ENCODE measurements at regions of chr11 and their contacts with region 1.

Region 1: DNA sequence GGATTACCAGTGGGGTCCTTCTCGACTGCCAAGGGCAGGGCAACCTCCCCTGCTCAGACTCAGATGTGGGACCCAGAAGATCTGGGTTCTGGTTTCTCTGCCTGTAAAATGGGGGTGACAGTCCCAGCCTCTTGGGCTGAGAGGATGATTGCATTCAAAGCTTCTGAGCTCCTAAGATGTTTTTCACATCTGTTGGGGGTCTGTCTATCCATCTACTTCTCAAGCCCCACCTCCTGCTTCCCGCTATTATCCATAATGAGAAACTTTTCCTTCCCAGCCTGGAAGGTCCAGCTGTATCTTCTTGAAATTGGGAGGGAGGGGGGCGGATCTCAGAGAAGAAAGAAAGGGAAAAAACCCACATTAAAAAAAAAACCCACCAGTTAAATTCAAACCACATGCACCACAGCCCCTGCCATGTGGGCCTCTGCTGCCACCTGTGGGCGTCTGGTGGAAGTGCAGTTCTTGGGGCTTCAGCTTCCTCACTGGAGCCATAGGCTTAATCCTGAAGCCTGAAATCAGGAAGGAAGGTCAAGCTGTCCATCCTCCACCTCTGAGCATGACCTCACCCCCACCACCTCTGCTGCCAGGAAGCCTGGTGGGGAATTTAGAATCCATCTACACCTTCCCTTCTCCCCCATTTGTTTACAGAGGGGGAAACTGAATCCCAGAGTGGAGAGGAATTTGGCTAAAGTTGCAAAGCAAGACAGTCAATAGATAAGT is 27.3 kb downstream of the ARHGEF17 start:
- DNase-seq: peak; percentile 91
- H3K4me3 ChIP-seq: no peak overlapping the region
- H3K27ac ChIP-seq: peak overlapping the region in 6 of 8 donors; percentile 36 to 63 (median 50)
- H3K4me1 ChIP-seq: peaks cover 3 to 74% (median 36%) of the 10 kb centered on the region in 6 donors
- H3K27me3 ChIP-seq: no peaks in the 10 kb centered on the region
- CTCF ChIP-seq: peak; percentile 92 to 99 (median 98)
- POLR2A ChIP-seq: no peak

Region 2: DNA sequence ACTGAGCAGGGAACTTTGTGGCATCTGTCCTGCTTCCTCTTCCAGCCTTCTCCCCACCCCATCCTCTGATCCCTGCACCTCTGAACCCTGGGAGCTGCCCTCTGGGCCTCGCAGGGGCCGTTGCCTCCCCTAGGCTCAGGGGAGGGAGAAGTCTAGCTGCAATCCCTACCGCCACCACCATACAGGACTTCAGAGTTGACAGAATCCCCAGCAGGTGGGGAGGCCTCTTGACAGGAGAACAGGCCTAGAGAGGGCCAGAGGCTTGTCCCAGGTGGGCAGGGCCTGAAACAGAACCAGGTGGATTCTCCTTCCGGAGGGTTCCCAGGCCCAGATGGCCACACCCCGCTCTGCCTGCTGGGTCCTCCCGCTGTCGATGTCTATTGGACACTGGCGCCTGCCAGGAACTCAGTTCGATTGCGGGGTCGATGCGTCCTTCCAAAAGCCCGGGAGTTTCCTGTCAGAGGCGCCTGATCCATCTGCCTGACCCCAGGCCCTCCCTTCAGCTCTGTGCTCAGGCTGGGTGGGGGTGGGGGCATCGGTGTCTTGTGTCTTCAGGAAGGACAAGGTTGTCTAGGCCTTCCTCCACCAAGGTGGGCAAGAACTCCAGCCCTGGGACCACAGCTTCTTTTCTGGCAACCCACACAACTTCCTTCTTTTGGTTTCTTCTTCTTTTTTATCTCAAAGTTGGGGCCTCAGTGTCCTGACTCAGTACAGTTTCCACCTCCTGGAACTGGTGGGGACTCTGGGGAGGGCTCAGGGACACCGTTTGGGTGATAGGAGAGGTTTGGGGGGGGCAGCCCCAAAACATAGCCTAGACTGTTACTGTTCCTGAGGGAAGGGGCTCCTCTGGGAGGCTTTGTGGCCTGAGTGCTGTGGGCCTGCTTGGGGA is 547.9 kb before region 1 on chr11:
- intact Hi-C with region 1: no loop called
- DNase-seq: peak; percentile 81
- H3K4me3 ChIP-seq: peak overlapping the region in 1 of 8 donors; percentile 21
- H3K27ac ChIP-seq: peak overlapping the region; percentile 60 to 85 (median 75)
- H3K4me1 ChIP-seq: peaks cover 18 to 51% (median 25%) of the 10 kb centered on the region in 6 donors
- H3K27me3 ChIP-seq: no peaks in the 10 kb centered on the region
- CTCF ChIP-seq: peak in 9 of 11 experiments; percentile 3 to 41 (median 32)
- POLR2A ChIP-seq: no peak

Region 3: GRCh38 chr11:73184953-73185671 is 150.3 kb before region 1 on chr11:
- intact Hi-C with region 1: no loop called
- DNase-seq: peak; percentile 92
- H3K4me3 ChIP-seq: peak overlapping the region in 2 of 8 donors; percentile 15 to 59
- H3K27ac ChIP-seq: peak overlapping the region in 6 of 8 donors; percentile 15 to 70 (median 44)
- H3K4me1 ChIP-seq: peaks cover 14 to 71% (median 43%) of the 10 kb centered on the region in 6 donors
- H3K27me3 ChIP-seq: no peaks in the 10 kb centered on the region
- CTCF ChIP-seq: peak; percentile 88 to 97 (median 92)
- POLR2A ChIP-seq: no peak

Region 4: DNA sequence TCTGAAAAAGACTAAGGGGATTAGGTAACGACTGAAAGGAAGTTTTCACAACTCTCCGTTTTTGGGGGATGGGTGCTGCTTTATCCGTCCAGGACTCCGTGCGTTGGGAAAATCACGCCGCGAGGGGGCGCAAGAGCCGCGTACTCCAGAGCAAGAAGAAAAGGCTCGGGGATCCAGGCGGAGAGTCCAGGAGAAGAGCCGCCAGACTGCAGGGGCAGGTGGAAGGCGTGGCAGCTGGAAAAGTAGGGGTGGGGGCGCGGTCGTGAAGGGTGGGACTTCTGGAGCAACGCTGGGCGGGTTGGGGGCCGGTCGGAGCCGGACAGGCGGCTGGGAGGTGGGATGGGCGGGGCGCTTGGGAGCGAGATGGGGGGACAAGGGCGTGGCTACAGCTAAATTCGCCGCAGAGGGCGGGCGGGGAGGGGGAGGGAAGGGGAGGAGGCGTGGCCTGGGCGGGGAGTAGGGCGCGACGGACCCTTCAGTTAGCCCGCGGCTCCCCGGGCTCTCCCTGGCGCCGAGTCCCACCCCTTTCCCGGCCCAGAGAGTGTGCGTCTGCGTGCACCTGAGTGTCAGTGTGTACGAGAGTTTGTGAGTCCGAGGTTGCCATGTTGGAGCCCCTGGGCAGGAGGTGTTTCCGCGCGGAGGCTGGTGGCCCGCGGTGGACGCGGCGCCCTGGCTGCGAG is 27.9 kb before region 1 on chr11:
- intact Hi-C with region 1: loop called (anchors 2 kb)
- DNase-seq: peak; percentile 97
- H3K4me3 ChIP-seq: peak overlapping the region; percentile 62 to 86 (median 76)
- H3K27ac ChIP-seq: peak overlapping the region; percentile 57 to 89 (median 85)
- H3K4me1 ChIP-seq: peaks cover 9 to 64% (median 38%) of the 10 kb centered on the region in 6 donors
- H3K27me3 ChIP-seq: peaks cover 0 to 49% (median 14%) of the 10 kb centered on the region in 7 donors
- CTCF ChIP-seq: peak; percentile 78 to 93 (median 85)
- POLR2A ChIP-seq: no peak

Region 5: DNA sequence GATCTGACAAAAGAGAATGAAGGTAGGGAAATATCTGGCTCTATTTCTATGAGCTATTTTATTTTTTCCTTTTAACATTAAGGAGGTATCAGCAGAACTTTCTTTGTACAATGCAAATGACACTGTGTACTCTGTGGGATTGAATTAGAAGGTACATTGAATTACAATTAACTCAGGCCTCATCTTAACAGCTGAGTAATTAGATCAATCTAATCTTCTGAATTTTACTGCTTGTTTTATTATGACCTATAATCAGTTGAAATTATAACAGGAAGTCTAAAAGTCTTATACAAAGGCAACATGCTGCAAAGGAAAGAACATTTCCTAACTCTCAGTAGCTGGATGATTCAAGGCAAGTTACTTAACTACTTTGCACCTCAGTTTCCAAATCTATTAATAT is 110.6 kb after region 1 on chr11:
- intact Hi-C with region 1: no loop called
- DNase-seq: no peak
- H3K4me3 ChIP-seq: no peak overlapping the region
- H3K27ac ChIP-seq: no peak overlapping the region
- H3K4me1 ChIP-seq: peaks cover 0 to 12% (median 0%) of the 10 kb centered on the region in 6 donors
- H3K27me3 ChIP-seq: no peaks in the 10 kb centered on the region
- CTCF ChIP-seq: no peak
- POLR2A ChIP-seq: no peak